GM13977 (cell line): ENCODE measurements at regions of chr1 and their contacts with region 1.

Region 1: GRCh38 chr1:45303582-45304310 is 22.9 kb upstream of the HPDL start:
- DNase-seq: peak; percentile 96
- CTCF ChIP-seq: peak; percentile 86

Region 2: GRCh38 chr1:44835738-44836675 is 467.7 kb before region 1 on chr1:
- in situ Hi-C with region 1: loop called (anchors 25 kb)
- DNase-seq: peak; percentile 86
- CTCF ChIP-seq: peak; percentile 84

Region 3: GRCh38 chr1:45018599-45019230 is 285.0 kb before region 1 on chr1:
- in situ Hi-C with region 1: loop called (anchors 5 kb)
- DNase-seq: no peak
- CTCF ChIP-seq: peak; percentile 71

Region 4: GRCh38 chr1:45359882-45360513 is 56.3 kb after region 1 on chr1:
- in situ Hi-C with region 1: loop called (anchors 10 kb)
- DNase-seq: no peak
- CTCF ChIP-seq: peak; percentile 72

Region 5: DNA sequence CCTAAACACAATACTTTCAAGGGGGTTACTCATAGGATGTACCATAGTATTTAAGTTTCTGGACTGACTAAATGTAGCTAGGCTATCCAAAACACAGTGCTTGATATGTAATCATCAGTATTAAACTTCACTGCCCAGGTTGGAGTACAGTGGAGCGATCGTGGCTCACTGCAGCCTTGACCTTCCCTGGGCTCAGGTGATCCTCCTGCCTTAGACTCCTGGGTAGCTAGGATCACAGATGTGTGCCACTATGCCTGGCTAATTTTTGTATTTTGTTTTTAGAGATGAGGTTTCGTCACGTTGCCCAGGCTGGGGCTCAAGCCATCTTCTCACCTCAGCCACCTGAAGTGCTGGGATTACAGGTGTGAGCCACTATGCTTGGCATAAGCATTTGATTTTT is 290.7 kb after region 1 on chr1:
- in situ Hi-C with region 1: no loop called
- DNase-seq: no peak
- CTCF ChIP-seq: no peak